ENCODE measurements at regions of chr7 and their contacts with region 1.

Region 1: DNA sequence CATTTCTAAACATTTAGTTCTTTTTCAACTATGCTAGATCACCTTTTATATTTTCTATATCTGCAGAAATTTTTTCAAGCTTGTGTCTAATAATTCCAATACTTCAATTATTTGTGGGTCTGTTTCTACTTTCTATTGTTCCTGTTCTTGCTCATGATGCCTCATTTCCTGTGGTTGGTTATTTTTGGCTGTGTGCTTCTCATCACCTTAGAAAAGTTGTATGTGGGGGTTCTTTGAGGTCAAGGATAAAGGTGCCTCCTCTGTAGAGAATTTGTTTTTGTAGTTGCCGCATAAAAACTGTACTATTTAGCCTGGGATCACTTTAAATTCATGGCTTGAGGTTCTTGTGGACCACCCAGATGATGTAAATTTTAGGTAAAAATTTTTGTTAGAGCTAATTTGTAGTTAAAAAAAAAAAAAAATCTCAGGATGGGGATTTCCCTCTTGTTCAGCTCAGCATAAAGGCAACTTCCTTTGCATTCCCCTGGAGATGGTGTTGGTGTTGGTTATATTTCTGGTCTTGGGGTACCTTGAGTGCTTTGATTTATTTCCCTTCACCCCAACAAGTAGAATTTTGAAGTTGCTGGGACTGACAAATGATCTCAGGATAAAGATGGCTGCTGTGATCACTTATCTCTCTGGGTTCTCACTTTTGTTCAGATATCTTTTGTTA is 27.0 kb upstream of the JAZF1 start:
- DNase-seq: peak; percentile 62
- ATAC-seq: peak; percentile 69
- H3K4me3 ChIP-seq: peak overlapping the region in 1 of 5 experiments; percentile 26
- H3K4me3 Mint-ChIP-seq: peak overlapping the region; percentile 50
- H3K27ac ChIP-seq: peak overlapping the region; percentile 70 to 71
- H3K27ac Mint-ChIP-seq: peak overlapping the region; percentile 80
- H3K4me1 ChIP-seq: peaks cover 44 to 64% of the 10 kb centered on the region in 2 donors
- H3K4me1 Mint-ChIP-seq: peaks cover 66% of the 10 kb centered on the region
- H3K27me3 ChIP-seq: no peaks in the 10 kb centered on the region
- H3K27me3 Mint-ChIP-seq: no peaks in the 10 kb centered on the region
- CTCF ChIP-seq: no peak

Region 2: GRCh38 chr7:28052933-28053332 is 154.7 kb before region 1 on chr7:
- CTCF ChIA-PET with region 1: no interaction called
- POLR2A ChIA-PET with region 1: no interaction called
- intact Hi-C with region 1: no loop called
- DNase-seq: no peak
- ATAC-seq: no peak
- H3K4me3 ChIP-seq: no peak overlapping the region
- H3K4me3 Mint-ChIP-seq: no peak overlapping the region
- H3K27ac ChIP-seq: no peak overlapping the region
- H3K27ac Mint-ChIP-seq: no peak overlapping the region
- H3K4me1 ChIP-seq: peaks cover 5 to 13% of the 10 kb centered on the region in 2 donors
- H3K4me1 Mint-ChIP-seq: peaks cover 38% of the 10 kb centered on the region
- H3K27me3 ChIP-seq: no peaks in the 10 kb centered on the region
- H3K27me3 Mint-ChIP-seq: no peaks in the 10 kb centered on the region
- CTCF ChIP-seq: no peak

Region 3: GRCh38 chr7:28155019-28155660 is 52.5 kb before region 1 on chr7:
- CTCF ChIA-PET with region 1: no interaction called
- POLR2A ChIA-PET with region 1: no interaction called
- intact Hi-C with region 1: loop called (anchors 10 kb)
- DNase-seq: peak; percentile 79
- ATAC-seq: peak; percentile 78
- H3K4me3 ChIP-seq: peak overlapping the region in 4 of 5 experiments; percentile 23 to 58 (median 36)
- H3K4me3 Mint-ChIP-seq: peak overlapping the region; percentile 59
- H3K27ac ChIP-seq: peak overlapping the region; percentile 71 to 74
- H3K27ac Mint-ChIP-seq: peak overlapping the region; percentile 84
- H3K4me1 ChIP-seq: peaks cover 89 to 98% of the 10 kb centered on the region in 2 donors
- H3K4me1 Mint-ChIP-seq: peaks cover 88% of the 10 kb centered on the region
- H3K27me3 ChIP-seq: no peaks in the 10 kb centered on the region
- H3K27me3 Mint-ChIP-seq: no peaks in the 10 kb centered on the region
- CTCF ChIP-seq: no peak

Region 4: GRCh38 chr7:28272461-28272877 is 64.8 kb after region 1 on chr7:
- CTCF ChIA-PET with region 1: no interaction called
- POLR2A ChIA-PET with region 1: no interaction called
- intact Hi-C with region 1: loop called (anchors 5 kb)
- DNase-seq: peak; percentile 76
- ATAC-seq: peak; percentile 68
- H3K4me3 ChIP-seq: peak overlapping the region in 3 of 5 experiments; percentile 13 to 51 (median 27)
- H3K4me3 Mint-ChIP-seq: peak overlapping the region; percentile 60
- H3K27ac ChIP-seq: no peak overlapping the region
- H3K27ac Mint-ChIP-seq: no peak overlapping the region
- H3K4me1 ChIP-seq: peaks cover 14 to 22% of the 10 kb centered on the region in 2 donors
- H3K4me1 Mint-ChIP-seq: peaks cover 25% of the 10 kb centered on the region
- H3K27me3 ChIP-seq: no peaks in the 10 kb centered on the region
- H3K27me3 Mint-ChIP-seq: no peaks in the 10 kb centered on the region
- CTCF ChIP-seq: peak; percentile 80

Measured in B cell (primary cell).